ENCODE measurements at regions of chr4 and their contacts with region 1.

Region 1: GRCh38 chr4:173301518-173302201 is 32.5 kb downstream of the HMGB2 start:
- DNase-seq: peak; percentile 46
- ATAC-seq: peak; percentile 47
- H3K4me3 Mint-ChIP-seq: no peak overlapping the region
- H3K27ac Mint-ChIP-seq: no peak overlapping the region
- H3K4me1 Mint-ChIP-seq: no peaks in the 10 kb centered on the region
- H3K27me3 Mint-ChIP-seq: no peaks in the 10 kb centered on the region

Region 2: DNA sequence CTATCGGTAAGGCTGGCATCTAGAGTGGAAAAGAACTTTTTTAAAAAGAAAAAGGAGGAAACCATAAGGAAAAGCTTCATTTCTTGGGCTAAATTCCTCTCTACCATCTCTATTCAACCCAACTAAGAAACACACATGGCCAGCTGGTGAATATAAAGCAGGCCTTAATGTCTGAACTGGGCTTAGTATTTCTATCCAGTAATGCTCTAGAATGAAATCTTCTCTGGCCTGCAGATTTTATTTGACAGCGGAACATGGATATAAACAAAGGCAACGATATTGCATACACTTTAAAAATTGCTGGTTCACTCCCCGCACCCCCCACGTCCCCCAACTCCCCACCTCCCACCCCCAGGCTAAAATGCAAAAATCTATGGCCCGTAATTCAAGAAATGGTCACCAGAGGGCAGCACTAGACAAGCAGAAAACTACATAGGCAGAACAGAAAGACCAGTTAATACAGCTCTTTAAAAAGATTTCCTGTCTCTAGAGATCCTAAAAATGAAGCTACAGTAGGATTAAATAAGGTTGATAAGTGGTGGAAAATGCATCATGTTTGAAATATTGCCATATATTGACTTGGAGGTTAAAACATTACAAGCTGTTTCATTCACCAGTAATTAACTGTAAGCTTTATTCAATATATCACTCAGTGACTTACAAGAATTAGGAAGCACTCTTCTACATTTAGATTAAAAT is 288.3 kb before region 1 on chr4:
- CTCF ChIA-PET with region 1: interaction called, 87 read pairs
- POLR2A ChIA-PET with region 1: interaction called, 3 read pairs
- DNase-seq: peak; percentile 64
- ATAC-seq: no peak
- H3K4me3 Mint-ChIP-seq: no peak overlapping the region
- H3K27ac Mint-ChIP-seq: no peak overlapping the region
- H3K4me1 Mint-ChIP-seq: peaks cover 4% of the 10 kb centered on the region
- H3K27me3 Mint-ChIP-seq: peaks cover 7% of the 10 kb centered on the region

Region 3: DNA sequence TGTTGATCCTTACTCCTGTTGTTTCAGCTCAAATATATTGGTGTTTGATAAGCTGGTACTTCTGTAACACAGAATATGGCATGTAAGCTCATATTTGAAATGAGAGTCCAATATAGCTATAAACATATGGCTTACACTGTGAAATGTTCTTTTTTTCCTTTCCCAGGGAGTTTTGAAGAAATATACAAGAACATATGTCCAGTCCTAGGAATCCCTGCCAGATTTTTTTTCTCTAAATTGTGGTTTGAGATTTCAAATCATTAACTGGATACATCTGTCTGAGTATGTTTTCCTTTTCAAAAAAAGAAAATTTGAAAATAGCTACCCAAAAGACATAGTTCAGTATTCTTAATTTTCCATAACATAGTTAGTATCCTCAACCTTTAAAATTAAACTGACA is 27.7 kb before region 1 on chr4:
- CTCF ChIA-PET with region 1: interaction called, 22 read pairs
- POLR2A ChIA-PET with region 1: no interaction called
- DNase-seq: no peak
- ATAC-seq: no peak
- H3K4me3 Mint-ChIP-seq: no peak overlapping the region
- H3K27ac Mint-ChIP-seq: no peak overlapping the region
- H3K4me1 Mint-ChIP-seq: no peaks in the 10 kb centered on the region
- H3K27me3 Mint-ChIP-seq: no peaks in the 10 kb centered on the region

Region 4: DNA sequence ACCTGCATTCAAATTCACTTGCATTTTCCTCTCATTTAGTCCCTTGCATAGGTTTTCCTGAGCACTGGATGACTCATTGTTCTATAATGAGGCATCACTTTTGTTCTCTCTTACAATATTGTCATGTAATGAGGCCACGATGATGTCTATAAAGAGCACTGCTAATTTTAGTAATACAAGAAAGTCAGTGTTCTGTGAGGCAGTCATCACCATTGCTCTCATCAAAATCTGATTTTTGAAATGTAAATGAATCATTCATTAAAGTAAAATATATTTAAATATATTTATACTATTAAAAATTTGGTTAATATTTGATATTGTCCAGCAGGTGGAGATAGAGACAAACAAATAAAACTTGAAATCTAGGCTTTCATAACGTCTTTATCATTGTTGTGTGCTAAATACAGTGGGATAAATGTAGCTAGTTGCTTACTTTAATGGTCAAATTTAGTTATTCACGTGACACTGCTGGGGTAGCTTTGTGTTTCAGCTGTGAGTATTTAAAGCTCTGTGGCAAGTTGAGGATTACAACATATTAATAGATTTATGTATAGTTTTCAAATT is 17.1 kb after region 1 on chr4:
- CTCF ChIA-PET with region 1: interaction called, 30 read pairs
- POLR2A ChIA-PET with region 1: interaction called, 3 read pairs
- DNase-seq: no peak
- ATAC-seq: no peak
- H3K4me3 Mint-ChIP-seq: no peak overlapping the region
- H3K27ac Mint-ChIP-seq: no peak overlapping the region
- H3K4me1 Mint-ChIP-seq: no peaks in the 10 kb centered on the region
- H3K27me3 Mint-ChIP-seq: no peaks in the 10 kb centered on the region

Region 5: GRCh38 chr4:173370477-173371291 is 69.0 kb after region 1 on chr4 and contains the start of gene SAP30:
- CTCF ChIA-PET with region 1: interaction called, 11 read pairs
- POLR2A ChIA-PET with region 1: no interaction called
- DNase-seq: peak; percentile 98
- ATAC-seq: peak; percentile 82
- H3K4me3 Mint-ChIP-seq: peak within 1 kb of the TSS; percentile 100
- H3K27ac Mint-ChIP-seq: peak within 1 kb of the TSS; percentile 96
- H3K4me1 Mint-ChIP-seq: peaks cover 33% of the 10 kb centered on the region
- H3K27me3 Mint-ChIP-seq: no peaks in the 10 kb centered on the region
- total RNA-seq, gene SAP30: 19.7 to 21.0 TPM

Region 6: GRCh38 chr4:173420324-173420752 is 118.7 kb after region 1 on chr4:
- CTCF ChIA-PET with region 1: interaction called, 28 read pairs
- POLR2A ChIA-PET with region 1: no interaction called
- DNase-seq: no peak
- ATAC-seq: no peak
- H3K4me3 Mint-ChIP-seq: no peak overlapping the region
- H3K27ac Mint-ChIP-seq: no peak overlapping the region
- H3K4me1 Mint-ChIP-seq: peaks cover 9% of the 10 kb centered on the region
- H3K27me3 Mint-ChIP-seq: peaks cover 9% of the 10 kb centered on the region

Measured in activated CD8-positive, alpha-beta T cell treated with anti-CD3 and anti-CD28 coated beads, Interleukin-2, amount 10 ng/mL, durations not matched to agents 7 days and 5 days (primary cell).